ENCODE measurements at regions of chr5 and their contacts with region 1.

Region 1: GRCh38 chr5:157180374-157181264 is at the start of gene ITK:
- DNase-seq: peak; percentile 80
- ATAC-seq: peak; percentile 80
- H3K4me3 Mint-ChIP-seq: peak within 1 kb of the TSS; percentile 99
- H3K27ac Mint-ChIP-seq: peak within 1 kb of the TSS; percentile 98
- H3K4me1 Mint-ChIP-seq: peaks cover 47% of the 10 kb centered on the region
- H3K27me3 Mint-ChIP-seq: no peaks in the 10 kb centered on the region
- total RNA-seq, gene ITK: 254 to 263 TPM

Region 2: DNA sequence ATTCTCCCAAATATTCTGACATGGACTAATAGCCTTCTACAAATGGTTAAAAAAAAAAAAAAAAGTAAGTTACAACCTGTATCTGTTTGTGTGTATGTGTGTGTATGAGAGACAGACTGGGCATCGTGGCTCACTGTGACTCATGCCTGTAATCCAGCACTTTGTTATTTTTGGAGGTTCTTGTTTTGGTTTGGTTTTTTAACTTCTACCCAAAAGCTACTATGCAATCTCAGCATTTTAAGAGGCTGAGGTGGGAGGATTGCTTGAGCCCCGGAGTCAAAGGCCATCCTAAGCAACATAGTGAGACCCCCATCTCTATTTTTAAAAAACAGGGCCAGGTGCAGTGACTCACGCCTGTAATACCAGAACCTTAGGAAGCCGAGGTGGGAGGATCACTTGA is 104.1 kb before region 1 on chr5:
- CTCF ChIA-PET with region 1: no interaction called
- POLR2A ChIA-PET with region 1: no interaction called
- DNase-seq: peak; percentile 44
- ATAC-seq: peak; percentile 61
- H3K4me3 Mint-ChIP-seq: no peak overlapping the region
- H3K27ac Mint-ChIP-seq: peak overlapping the region; percentile 68
- H3K4me1 Mint-ChIP-seq: peaks cover 58% of the 10 kb centered on the region
- H3K27me3 Mint-ChIP-seq: no peaks in the 10 kb centered on the region

Region 3: DNA sequence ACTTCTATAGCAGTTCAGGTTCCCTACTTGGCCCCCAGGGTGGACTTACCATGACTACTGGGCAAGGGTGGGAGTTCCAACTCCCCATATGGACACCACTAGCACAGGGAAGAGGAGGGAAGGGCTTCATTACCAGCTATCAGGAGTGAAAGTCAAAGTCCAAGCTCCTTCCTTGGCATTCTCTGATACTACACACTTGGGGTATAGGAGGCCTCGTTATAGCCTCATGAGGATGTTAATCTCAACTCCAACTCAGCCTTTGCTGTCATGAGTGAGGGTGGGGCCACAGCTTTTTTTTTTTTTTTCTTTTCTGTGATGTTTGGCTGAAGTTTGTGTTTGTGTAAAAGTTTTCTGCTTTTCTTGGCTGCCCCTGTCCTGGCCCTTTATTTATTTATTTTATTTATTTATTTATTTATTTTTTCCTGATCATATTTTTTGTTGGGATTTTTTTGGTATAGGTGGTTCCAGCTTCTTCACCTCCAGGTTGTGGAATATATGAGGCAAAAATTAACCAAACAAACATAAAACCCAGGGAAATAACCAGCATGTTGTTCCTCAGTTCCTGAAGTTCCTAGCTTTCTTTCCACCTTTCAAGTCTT is 23.2 kb before region 1 on chr5:
- CTCF ChIA-PET with region 1: interaction called, 162 read pairs
- POLR2A ChIA-PET with region 1: interaction called, 21 read pairs
- DNase-seq: peak; percentile 18
- ATAC-seq: no peak
- H3K4me3 Mint-ChIP-seq: no peak overlapping the region
- H3K27ac Mint-ChIP-seq: no peak overlapping the region
- H3K4me1 Mint-ChIP-seq: peaks cover 68% of the 10 kb centered on the region
- H3K27me3 Mint-ChIP-seq: no peaks in the 10 kb centered on the region

Region 4: DNA sequence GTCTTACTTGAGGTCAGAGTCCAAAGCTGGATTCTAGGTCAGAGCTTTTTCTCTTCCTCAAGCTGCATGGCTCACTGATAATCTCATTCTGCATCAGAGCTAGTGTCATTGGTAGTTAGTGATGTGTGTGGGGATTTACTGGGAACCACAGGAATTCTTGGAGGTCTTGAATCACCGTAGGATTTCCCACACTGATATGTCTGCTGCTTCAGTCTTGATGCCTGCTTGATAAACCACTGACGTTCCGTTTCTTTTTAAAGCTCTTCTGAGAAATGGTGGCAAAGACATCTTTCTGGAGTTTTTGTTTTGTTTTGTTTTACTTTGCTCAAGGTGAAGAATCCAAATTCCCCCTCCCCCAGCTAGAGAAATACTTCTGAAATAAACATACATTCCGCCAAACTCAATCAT is 13.4 kb before region 1 on chr5:
- CTCF ChIA-PET with region 1: interaction called, 10 read pairs
- POLR2A ChIA-PET with region 1: interaction called, 22 read pairs
- DNase-seq: peak; percentile 26
- ATAC-seq: peak; percentile 45
- H3K4me3 Mint-ChIP-seq: peak overlapping the region; percentile 69
- H3K27ac Mint-ChIP-seq: peak overlapping the region; percentile 85
- H3K4me1 Mint-ChIP-seq: peaks cover 67% of the 10 kb centered on the region
- H3K27me3 Mint-ChIP-seq: no peaks in the 10 kb centered on the region

Region 5: DNA sequence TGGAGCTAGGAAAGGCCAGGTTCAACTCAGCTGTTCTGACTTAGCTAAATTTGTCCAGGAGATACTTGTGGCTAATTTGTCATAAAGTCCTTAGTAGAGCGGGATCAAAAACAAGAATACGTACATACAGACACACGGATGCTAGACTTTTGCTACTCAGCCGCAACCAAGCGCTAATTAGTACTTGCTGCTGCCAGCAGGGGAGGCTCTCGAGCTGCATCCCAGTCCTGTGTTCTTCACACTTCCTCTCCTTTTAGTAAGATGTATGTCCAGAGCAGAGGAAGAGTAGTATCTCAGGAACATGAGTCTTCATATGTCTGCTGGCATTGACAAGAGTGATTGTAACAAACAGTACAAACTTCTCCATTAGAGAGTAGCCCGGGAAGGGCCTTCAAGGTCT is 143.6 kb after region 1 on chr5:
- CTCF ChIA-PET with region 1: no interaction called
- POLR2A ChIA-PET with region 1: no interaction called
- DNase-seq: no peak
- ATAC-seq: no peak
- H3K4me3 Mint-ChIP-seq: no peak overlapping the region
- H3K27ac Mint-ChIP-seq: peak overlapping the region; percentile 44
- H3K4me1 Mint-ChIP-seq: peaks cover 27% of the 10 kb centered on the region
- H3K27me3 Mint-ChIP-seq: no peaks in the 10 kb centered on the region

Region 6: DNA sequence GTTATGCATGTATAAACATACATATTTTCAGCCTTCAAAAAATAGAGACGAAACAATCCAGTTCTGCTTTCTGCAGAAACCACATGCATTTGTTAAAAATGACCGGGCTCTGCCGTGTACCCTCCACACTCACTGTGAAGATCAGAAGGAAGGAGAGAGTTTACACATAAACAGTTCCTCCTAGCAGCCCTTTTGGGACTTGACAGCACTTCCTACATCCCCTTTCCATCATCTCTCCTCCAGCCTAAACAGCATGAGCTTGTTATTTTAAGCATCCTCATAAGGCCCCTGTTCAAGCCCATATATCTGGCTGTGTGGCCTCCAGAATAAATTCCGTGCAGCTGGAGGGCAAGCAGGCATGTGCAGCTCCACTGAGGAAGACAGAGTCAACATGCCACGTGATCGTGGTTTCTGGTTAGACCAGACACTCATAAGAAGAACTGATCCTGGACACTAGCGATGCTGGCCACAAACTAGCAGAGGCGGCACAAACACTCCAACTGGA is 321.6 kb after region 1 on chr5:
- CTCF ChIA-PET with region 1: no interaction called
- POLR2A ChIA-PET with region 1: no interaction called
- DNase-seq: no peak
- ATAC-seq: peak; percentile 39
- H3K4me3 Mint-ChIP-seq: no peak overlapping the region
- H3K27ac Mint-ChIP-seq: no peak overlapping the region
- H3K4me1 Mint-ChIP-seq: peaks cover 30% of the 10 kb centered on the region
- H3K27me3 Mint-ChIP-seq: no peaks in the 10 kb centered on the region